Activated CD4-positive, alpha-beta T cell treated with anti-CD3 and anti-CD28 coated beads for 36 hours (primary cell): ENCODE measurements at regions of chr6 and their contacts with region 1.

Region 1: DNA sequence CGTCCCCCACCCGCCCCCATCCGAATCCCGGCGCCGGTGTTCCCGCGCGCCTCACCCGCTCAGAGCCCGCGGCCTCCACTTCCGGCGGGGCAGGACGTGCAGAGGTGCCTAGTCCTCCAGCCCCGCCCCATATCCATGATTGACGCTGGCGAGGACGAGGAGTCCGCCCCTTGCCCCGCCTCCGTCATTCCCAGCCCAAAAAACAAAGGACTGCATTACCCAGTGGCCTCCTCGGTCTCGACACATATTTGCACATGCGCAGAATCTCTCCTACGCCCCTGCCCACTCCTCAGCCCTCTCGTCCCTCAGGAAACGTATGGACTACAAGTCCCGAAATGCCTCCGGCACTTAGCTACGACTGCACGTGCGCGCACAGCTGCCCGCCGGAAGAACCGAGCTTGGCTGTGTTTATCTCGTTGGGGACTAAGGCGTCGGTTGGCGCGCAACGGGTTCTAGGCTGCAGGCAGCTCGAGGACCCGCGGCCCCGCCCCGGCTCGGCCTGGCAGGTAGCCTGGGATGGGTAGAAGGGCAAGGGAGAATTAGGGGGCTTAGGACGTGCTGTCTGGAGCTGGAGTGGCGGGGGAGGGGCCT is at the starts of genes KLHDC3 and MEA1:
- DNase-seq: peak; percentile 99
- ATAC-seq: peak; percentile 96
- H3K4me3 Mint-ChIP-seq: peak within 1 kb of the TSS; percentile 91
- H3K27ac Mint-ChIP-seq: peak within 1 kb of the TSS; percentile 87
- H3K4me1 Mint-ChIP-seq: peaks cover 39% of the 10 kb centered on the region
- H3K27me3 Mint-ChIP-seq: no peaks in the 10 kb centered on the region
- total RNA-seq, gene KLHDC3: 58.3 to 65.2 TPM
- total RNA-seq, gene MEA1: 93.4 to 129 TPM

Region 2: GRCh38 chr6:42740725-42741124 is 273.2 kb before region 1 on chr6:
- CTCF ChIA-PET with region 1: no interaction called
- POLR2A ChIA-PET with region 1: no interaction called
- intact Hi-C with region 1: no loop called
- DNase-seq: no peak
- ATAC-seq: no peak
- H3K4me3 Mint-ChIP-seq: no peak overlapping the region
- H3K27ac Mint-ChIP-seq: no peak overlapping the region
- H3K4me1 Mint-ChIP-seq: peaks cover 8% of the 10 kb centered on the region
- H3K27me3 Mint-ChIP-seq: no peaks in the 10 kb centered on the region

Region 3: DNA sequence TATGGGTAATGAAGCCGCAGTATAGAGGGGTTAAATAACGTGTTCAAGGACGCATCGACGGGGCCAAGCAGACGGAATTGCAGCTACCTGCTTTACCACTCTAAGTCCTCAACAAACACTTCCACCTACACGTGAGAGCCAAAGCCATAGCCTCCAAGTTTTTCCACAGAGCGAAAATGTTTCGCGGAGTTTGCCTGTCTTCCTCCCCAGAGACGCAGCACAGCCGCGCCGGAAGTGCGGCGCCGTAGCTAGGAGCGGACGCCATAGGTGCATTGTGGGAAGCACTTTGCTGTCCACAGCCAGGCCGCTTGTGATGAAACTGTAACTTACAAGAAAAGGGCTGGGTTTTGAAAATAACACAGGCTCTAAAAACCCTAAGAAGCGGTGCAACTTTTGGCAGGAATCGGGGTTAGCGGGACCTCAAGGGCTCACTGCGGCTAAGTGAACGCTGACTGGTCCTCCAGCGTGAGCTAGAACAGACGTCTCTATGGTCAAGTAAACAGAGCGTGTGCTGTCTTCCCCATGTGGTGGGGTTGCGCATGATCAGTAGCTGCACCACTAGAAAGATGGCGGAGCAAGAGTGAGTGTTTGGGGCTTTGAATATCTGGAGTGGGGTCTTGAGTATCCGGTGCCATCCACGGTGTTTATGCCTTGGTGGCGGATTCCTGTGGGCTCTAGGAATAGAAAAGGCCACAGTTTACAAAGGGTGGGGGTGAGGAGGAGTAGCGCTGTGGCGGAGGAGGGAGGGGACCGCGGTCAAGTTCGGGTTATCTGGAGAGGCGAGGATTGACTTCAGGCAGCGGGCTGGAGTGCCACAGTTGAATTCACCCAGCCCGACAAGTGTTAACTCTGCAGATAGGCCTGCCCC is 134.3 kb before region 1 on chr6 and contains the start of gene RPL7L1:
- CTCF ChIA-PET with region 1: no interaction called
- POLR2A ChIA-PET with region 1: interaction called, 3 read pairs
- intact Hi-C with region 1: loop called in 1 of 2 experiments (anchors 1 kb)
- DNase-seq: peak; percentile 89
- ATAC-seq: peak; percentile 96
- H3K4me3 Mint-ChIP-seq: peak within 1 kb of the TSS; percentile 99
- H3K27ac Mint-ChIP-seq: peak within 1 kb of the TSS; percentile 100
- H3K4me1 Mint-ChIP-seq: peaks cover 20% of the 10 kb centered on the region
- H3K27me3 Mint-ChIP-seq: no peaks in the 10 kb centered on the region
- total RNA-seq, gene RPL7L1: 124 to 152 TPM

Region 4: GRCh38 chr6:43029120-43029519 is 15.2 kb after region 1 on chr6:
- CTCF ChIA-PET with region 1: no interaction called
- POLR2A ChIA-PET with region 1: no interaction called
- intact Hi-C with region 1: no loop called
- DNase-seq: no peak
- ATAC-seq: no peak
- H3K4me3 Mint-ChIP-seq: no peak overlapping the region
- H3K27ac Mint-ChIP-seq: no peak overlapping the region
- H3K4me1 Mint-ChIP-seq: peaks cover 11% of the 10 kb centered on the region
- H3K27me3 Mint-ChIP-seq: no peaks in the 10 kb centered on the region

Region 5: DNA sequence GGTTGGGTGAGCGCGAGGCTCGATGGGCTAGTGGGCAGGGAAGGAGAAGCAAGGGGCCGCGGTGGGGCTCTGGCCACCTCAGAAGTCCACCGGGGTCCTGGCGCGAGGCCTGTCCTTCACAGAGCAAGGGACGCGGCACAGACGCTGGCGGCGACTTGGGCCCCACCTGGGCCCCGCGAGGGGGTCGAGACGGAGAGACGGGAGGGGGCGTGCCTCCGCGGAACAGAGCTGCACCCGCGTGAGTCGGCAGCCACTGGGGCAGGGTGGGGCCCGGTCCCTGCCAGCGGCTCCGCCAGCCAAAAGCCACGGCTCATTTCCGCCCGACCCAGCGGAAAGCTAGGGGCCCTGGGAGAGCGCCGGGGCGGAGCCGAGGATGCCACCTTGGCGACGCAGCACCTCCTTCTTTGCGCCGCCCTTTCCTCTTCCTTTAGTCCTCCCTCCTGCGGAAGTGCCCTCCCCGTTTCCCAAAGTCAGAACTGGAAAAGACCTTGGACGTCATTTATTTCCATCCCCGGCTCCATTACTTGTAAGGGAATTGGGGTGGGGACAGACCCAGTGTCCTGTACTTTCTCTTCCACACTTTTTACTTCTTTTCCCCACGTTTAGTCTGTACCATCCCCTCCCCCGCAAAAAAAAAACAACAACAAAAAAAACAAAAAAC is 39.7 kb after region 1 on chr6 and contains the start of gene CUL7:
- CTCF ChIA-PET with region 1: interaction called, 3 read pairs
- POLR2A ChIA-PET with region 1: no interaction called
- intact Hi-C with region 1: loop called in 1 of 2 experiments (anchors 1 kb)
- DNase-seq: peak; percentile 96
- ATAC-seq: peak; percentile 99
- H3K4me3 Mint-ChIP-seq: peak within 1 kb of the TSS; percentile 99
- H3K27ac Mint-ChIP-seq: peak within 1 kb of the TSS; percentile 97
- H3K4me1 Mint-ChIP-seq: peaks cover 43% of the 10 kb centered on the region
- H3K27me3 Mint-ChIP-seq: no peaks in the 10 kb centered on the region
- total RNA-seq, gene CUL7: 16.3 to 18.0 TPM

Region 6: GRCh38 chr6:43247113-43247999 is 233.4 kb after region 1 on chr6:
- CTCF ChIA-PET with region 1: no interaction called
- POLR2A ChIA-PET with region 1: no interaction called
- intact Hi-C with region 1: loop called in 1 of 2 experiments (anchors 1 kb)
- DNase-seq: peak; percentile 94
- ATAC-seq: peak; percentile 99
- H3K4me3 Mint-ChIP-seq: peak overlapping the region; percentile 68
- H3K27ac Mint-ChIP-seq: peak overlapping the region; percentile 62
- H3K4me1 Mint-ChIP-seq: peaks cover 25% of the 10 kb centered on the region
- H3K27me3 Mint-ChIP-seq: peaks cover 14% of the 10 kb centered on the region

Region 7: GRCh38 chr6:43477235-43478007 is 463.5 kb after region 1 on chr6 and contains the start of gene TJAP1:
- CTCF ChIA-PET with region 1: no interaction called
- POLR2A ChIA-PET with region 1: no interaction called
- intact Hi-C with region 1: loop called in 1 of 2 experiments (anchors 1 kb)
- DNase-seq: peak; percentile 98
- ATAC-seq: peak; percentile 99
- H3K4me3 Mint-ChIP-seq: peak within 1 kb of the TSS; percentile 98
- H3K27ac Mint-ChIP-seq: peak within 1 kb of the TSS; percentile 82
- H3K4me1 Mint-ChIP-seq: peaks cover 38% of the 10 kb centered on the region
- H3K27me3 Mint-ChIP-seq: no peaks in the 10 kb centered on the region
- total RNA-seq, gene TJAP1: 35.6 to 37.2 TPM